ENCODE measurements at regions of chr12 and their contacts with region 1.

Region 1: GRCh38 chr12:48758221-48758620 is 30.7 kb downstream of the ADCY6 start:
- DNase-seq: no peak
- CTCF ChIP-seq: no peak

Region 2: DNA sequence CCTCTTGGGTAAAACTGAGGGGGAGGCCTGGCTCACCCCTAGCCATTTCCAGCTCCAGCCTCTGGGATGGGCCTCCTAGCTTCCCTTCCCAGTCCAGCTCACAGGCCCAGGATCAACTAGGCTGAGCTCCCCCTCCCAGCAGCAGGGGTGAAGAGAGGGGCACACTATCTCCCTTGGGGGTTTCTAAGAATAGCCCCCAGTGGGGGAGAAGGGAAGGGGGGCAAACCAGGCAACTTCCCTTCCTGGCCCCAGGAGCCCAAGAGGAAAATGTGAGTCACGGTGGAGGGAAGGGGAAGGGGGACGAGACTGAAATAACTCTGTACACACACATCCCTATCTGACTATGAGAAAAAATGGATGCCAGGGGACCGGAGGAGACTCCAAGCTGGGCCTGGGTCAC is 21.6 kb after region 1 on chr12:
- CTCF ChIA-PET with region 1: interaction called, 24 read pairs
- POLR2A ChIA-PET with region 1: no interaction called
- DNase-seq: no peak
- CTCF ChIP-seq: no peak

Region 3: DNA sequence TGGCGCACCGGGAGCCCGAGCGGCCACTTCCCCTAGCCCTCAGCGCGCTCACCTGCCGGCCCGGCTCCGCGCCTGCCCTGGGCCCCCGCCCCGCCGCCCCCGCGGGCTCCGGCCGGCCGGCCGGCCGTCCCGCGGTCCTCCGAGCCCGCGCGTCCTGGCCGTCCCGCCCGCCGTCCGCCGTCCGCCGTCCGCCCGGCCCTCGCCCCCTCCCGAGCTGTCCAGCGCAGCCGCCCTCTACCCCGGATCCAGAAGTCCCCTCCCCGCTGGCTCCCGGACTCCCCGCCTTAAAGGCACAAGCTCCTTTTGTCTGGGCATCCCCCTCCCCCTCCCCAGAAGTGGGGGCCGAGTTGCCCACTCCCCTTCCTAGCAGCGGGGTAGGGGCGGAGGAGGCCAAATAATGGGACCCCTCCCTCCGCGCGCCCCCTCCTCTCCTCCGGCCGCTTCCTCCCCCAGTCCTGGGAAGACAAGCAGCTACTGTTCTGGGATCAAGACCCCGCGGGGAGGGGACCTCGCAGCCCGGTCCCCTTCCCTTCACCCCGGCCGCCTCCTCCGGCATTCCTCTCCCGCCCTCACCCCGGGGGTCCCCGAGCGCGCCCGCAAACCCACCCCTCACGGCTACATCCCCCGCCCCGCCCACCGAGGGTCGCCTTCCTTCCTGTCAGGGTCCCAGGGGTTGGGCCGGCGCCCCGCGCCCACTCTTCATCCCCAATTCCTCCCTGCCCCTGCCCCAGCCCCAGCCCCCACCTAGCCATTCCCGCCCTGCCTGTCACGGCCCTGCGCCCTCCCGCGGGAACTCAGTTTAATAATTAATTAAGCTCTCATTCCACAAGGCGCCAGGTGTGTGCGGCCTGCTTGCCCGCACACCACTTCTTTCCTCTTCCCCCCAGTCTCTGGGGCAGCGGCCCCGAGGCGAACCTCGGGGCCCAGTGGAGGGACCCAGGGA is 30.9 kb after region 1 on chr12 and contains the start of gene ADCY6:
- CTCF ChIA-PET with region 1: interaction called, 236 read pairs
- POLR2A ChIA-PET with region 1: no interaction called
- DNase-seq: peak; percentile 68
- CTCF ChIP-seq: no peak

Region 4: GRCh38 chr12:48795480-48796455 is 37.5 kb after region 1 on chr12:
- CTCF ChIA-PET with region 1: interaction called, 236 read pairs
- POLR2A ChIA-PET with region 1: no interaction called
- DNase-seq: peak; percentile 80
- CTCF ChIP-seq: peak; percentile 91

Measured in GM10248 (cell line).